Heart right ventricle (tissue), 16 donors: ENCODE measurements at regions of chr17 and their contacts with region 1.

Region 1: GRCh38 chr17:63697341-63698286 is 2.3 kb downstream of the LIMD2 start:
- DNase-seq: peak; percentile 34 to 55
- ATAC-seq: peak in 6 of 8 donors; percentile 1 to 32 (median 16)
- H3K4me3 ChIP-seq: peak overlapping the region in 6 of 10 donors; percentile 52 to 77 (median 60)
- H3K27ac ChIP-seq: peak overlapping the region in 5 of 10 donors; percentile 2 to 95 (median 82)
- H3K4me1 ChIP-seq: peaks cover 8 to 68% (median 31%) of the 10 kb centered on the region in 9 donors
- H3K27me3 ChIP-seq: no peaks in the 10 kb centered on the region
- CTCF ChIP-seq: peak in 8 of 9 donors; percentile 20 to 71 (median 43)

Region 2: GRCh38 chr17:63425482-63425881 is 272.1 kb before region 1 on chr17:
- intact Hi-C with region 1: loop called in 1 of 10 experiments (anchors 10 kb)
- DNase-seq: peak; percentile 63 to 84
- ATAC-seq: peak; percentile 75 to 88 (median 86)
- H3K4me3 ChIP-seq: no peak overlapping the region
- H3K27ac ChIP-seq: no peak overlapping the region
- H3K4me1 ChIP-seq: peaks cover 0 to 49% (median 25%) of the 10 kb centered on the region in 9 donors
- H3K27me3 ChIP-seq: no peaks in the 10 kb centered on the region
- CTCF ChIP-seq: peak; percentile 89 to 98 (median 98)

Region 3: GRCh38 chr17:63621766-63622519 is 75.7 kb before region 1 on chr17 and contains the start of gene MAP3K3:
- intact Hi-C with region 1: loop called in 1 of 10 experiments (anchors 10 kb)
- DNase-seq: peak; percentile 98 to 99
- ATAC-seq: peak; percentile 95 to 98 (median 96)
- H3K4me3 ChIP-seq: peak within 1 kb of the TSS; percentile 61 to 90 (median 77)
- H3K27ac ChIP-seq: peak within 1 kb of the TSS; percentile 84 to 95 (median 91)
- H3K4me1 ChIP-seq: peaks cover 4 to 46% (median 40%) of the 10 kb centered on the region in 9 donors
- H3K27me3 ChIP-seq: no peaks in the 10 kb centered on the region
- CTCF ChIP-seq: peak in 6 of 9 donors; percentile 25 to 52 (median 34)
- total RNA-seq, gene MAP3K3: 30.6 to 79.3 (median 50.3) TPM

Region 4: DNA sequence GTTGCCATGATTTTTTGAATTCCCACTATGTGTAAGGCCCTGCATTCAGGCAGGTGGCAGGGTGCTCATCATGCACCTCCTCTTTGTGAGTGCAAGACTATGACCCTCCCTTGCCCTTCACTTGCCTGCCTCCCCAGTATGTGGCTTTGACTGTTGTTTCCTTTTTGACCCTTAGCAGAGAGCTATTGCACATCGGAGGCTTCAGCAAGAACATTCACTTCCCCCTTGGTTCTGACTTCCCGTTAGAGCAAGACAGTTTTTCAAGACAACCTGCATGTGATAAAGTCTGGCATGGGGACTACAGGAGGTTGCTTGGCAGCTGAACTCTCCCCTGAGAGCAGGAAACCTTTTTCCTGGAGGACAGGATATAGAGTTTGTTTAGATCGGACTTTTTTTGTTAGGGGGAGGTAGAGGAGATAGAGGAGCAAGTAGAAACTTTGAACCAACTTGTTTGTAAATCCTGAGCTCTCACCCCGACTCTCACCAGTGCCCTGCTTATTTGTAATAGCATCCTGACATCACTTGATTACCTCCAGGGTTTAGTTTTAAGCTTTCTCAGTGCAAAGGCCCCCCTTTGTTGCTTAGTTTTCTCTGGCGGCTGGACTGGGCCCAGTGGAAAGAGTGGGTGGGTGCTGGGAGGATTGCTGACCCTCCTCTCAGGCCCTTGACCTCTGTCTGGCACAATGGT is 31.9 kb before region 1 on chr17:
- intact Hi-C with region 1: loop called in 1 of 10 experiments (anchors 2 kb)
- DNase-seq: peak in 1 of 2 donors; percentile 38
- ATAC-seq: peak; percentile 68 to 89 (median 83)
- H3K4me3 ChIP-seq: no peak overlapping the region
- H3K27ac ChIP-seq: peak overlapping the region in 7 of 10 donors; percentile 12 to 85 (median 36)
- H3K4me1 ChIP-seq: peaks cover 0 to 46% (median 23%) of the 10 kb centered on the region in 9 donors
- H3K27me3 ChIP-seq: no peaks in the 10 kb centered on the region
- CTCF ChIP-seq: no peak

Region 5: GRCh38 chr17:63741221-63742049 is 43.8 kb after region 1 on chr17 and contains the start of gene STRADA:
- intact Hi-C with region 1: loop called in 1 of 10 experiments (anchors 5 kb)
- DNase-seq: peak; percentile 98 to 99
- ATAC-seq: peak; percentile 99 to 100 (median 100)
- H3K4me3 ChIP-seq: peak within 1 kb of the TSS; percentile 69 to 97 (median 84)
- H3K27ac ChIP-seq: peak within 1 kb of the TSS; percentile 72 to 96 (median 92)
- H3K4me1 ChIP-seq: peaks cover 6 to 22% (median 16%) of the 10 kb centered on the region in 9 donors
- H3K27me3 ChIP-seq: no peaks in the 10 kb centered on the region
- CTCF ChIP-seq: peak in 1 of 9 donors; percentile 19
- total RNA-seq, gene STRADA: 12.2 to 19.0 (median 17.7) TPM

Region 6: GRCh38 chr17:63819585-63820537 is 122.2 kb after region 1 on chr17:
- intact Hi-C with region 1: no loop called
- DNase-seq: no peak
- ATAC-seq: peak in 5 of 8 donors; percentile 16 to 53 (median 28)
- H3K4me3 ChIP-seq: no peak overlapping the region
- H3K27ac ChIP-seq: peak overlapping the region in 7 of 10 donors; percentile 27 to 59 (median 49)
- H3K4me1 ChIP-seq: peaks cover 0 to 14% (median 7%) of the 10 kb centered on the region in 9 donors
- H3K27me3 ChIP-seq: no peaks in the 10 kb centered on the region
- CTCF ChIP-seq: no peak

Region 7: GRCh38 chr17:63834431-63835166 is 137.0 kb after region 1 on chr17:
- intact Hi-C with region 1: loop called in 1 of 10 experiments (anchors 10 kb)
- DNase-seq: no peak
- ATAC-seq: peak in 3 of 8 donors; percentile 14 to 29 (median 19)
- H3K4me3 ChIP-seq: no peak overlapping the region
- H3K27ac ChIP-seq: peak overlapping the region in 1 of 10 donors; percentile 18
- H3K4me1 ChIP-seq: peaks cover 20 to 40% (median 23%) of the 10 kb centered on the region in 9 donors
- H3K27me3 ChIP-seq: no peaks in the 10 kb centered on the region
- CTCF ChIP-seq: peak in 8 of 9 donors; percentile 16 to 58 (median 44)